Activated T-helper 2 cell treated with anti-CD3 and anti-CD28 coated beads, Interferon-gamma antibody, Interleukin-2, Interleukin-4, amounts not matched to agents 10 μg/mL and 5 μg/mL and 100 μg/mL, durations not matched to agents 14 hours and 24 hours and 36 hours (primary cell): ENCODE measurements at regions of chr9 and their contacts with region 1.

Region 1: DNA sequence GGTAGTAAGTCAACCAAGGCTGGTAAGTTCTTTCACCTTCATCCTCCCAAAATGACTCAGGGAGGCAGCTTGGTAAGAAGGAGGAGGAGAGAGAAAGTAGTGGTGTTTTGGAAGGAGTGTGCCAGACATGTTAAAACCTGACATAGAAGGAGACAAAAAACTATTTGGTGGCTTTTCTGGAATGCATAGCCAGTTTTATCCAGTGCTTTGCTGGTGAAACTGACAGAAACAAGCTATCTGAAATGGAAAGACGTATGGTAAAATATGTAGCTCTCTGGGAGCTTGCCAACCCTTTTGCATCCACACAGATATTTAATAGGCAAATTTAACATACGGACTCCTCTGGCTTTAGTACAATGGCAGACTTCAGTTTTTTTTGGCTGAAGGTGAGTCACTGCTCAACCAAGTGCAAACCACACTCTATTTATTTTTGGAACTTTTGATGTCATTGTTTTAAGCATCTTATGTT is 45.4 kb downstream of the RAB14 start:
- DNase-seq: no peak
- H3K4me3 Mint-ChIP-seq: no peak overlapping the region
- H3K27ac Mint-ChIP-seq: peak overlapping the region; percentile 87
- H3K4me1 Mint-ChIP-seq: peaks cover 30% of the 10 kb centered on the region
- H3K27me3 Mint-ChIP-seq: no peaks in the 10 kb centered on the region

Region 2: GRCh38 chr9:120807607-120808379 is 348.5 kb before region 1 on chr9:
- intact Hi-C with region 1: no loop called
- DNase-seq: no peak
- H3K4me3 Mint-ChIP-seq: no peak overlapping the region
- H3K27ac Mint-ChIP-seq: no peak overlapping the region
- H3K4me1 Mint-ChIP-seq: no peaks in the 10 kb centered on the region
- H3K27me3 Mint-ChIP-seq: no peaks in the 10 kb centered on the region

Region 3: GRCh38 chr9:121196389-121196788 is 40.1 kb after region 1 on chr9:
- intact Hi-C with region 1: loop called (anchors 5 kb)
- DNase-seq: no peak
- H3K4me3 Mint-ChIP-seq: no peak overlapping the region
- H3K27ac Mint-ChIP-seq: no peak overlapping the region
- H3K4me1 Mint-ChIP-seq: peaks cover 63% of the 10 kb centered on the region
- H3K27me3 Mint-ChIP-seq: no peaks in the 10 kb centered on the region

Region 4: DNA sequence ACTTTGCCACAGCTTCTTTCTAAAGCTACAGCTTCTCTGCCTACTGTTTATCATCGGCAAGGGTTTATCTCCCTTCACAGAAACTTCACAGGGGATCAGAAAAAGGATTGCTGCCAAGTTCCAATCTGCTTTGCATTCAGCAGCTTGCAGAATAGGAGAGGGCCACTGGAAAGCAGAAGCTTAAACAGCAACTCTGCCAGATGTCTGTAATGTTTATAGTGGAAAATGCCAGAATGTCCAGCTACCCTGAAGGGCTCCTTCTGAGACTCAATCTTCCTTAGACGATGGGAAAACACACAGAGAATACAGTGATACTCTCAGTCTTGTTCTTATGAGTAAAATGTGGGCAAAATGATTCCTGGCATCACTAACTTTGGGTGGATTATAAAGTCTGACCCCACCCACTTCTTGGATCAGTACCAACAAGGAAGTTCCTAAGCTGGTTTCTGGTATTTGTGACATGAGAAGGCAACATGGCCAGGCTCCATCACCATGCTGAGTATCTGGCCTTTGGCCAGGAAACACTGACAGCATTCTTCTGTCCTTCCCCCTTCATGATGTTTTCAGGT is 194.8 kb after region 1 on chr9:
- intact Hi-C with region 1: no loop called
- DNase-seq: no peak
- H3K4me3 Mint-ChIP-seq: no peak overlapping the region
- H3K27ac Mint-ChIP-seq: no peak overlapping the region
- H3K4me1 Mint-ChIP-seq: peaks cover 13% of the 10 kb centered on the region
- H3K27me3 Mint-ChIP-seq: no peaks in the 10 kb centered on the region